ENCODE measurements at regions of chr19 and their contacts with region 1.

Region 1: DNA sequence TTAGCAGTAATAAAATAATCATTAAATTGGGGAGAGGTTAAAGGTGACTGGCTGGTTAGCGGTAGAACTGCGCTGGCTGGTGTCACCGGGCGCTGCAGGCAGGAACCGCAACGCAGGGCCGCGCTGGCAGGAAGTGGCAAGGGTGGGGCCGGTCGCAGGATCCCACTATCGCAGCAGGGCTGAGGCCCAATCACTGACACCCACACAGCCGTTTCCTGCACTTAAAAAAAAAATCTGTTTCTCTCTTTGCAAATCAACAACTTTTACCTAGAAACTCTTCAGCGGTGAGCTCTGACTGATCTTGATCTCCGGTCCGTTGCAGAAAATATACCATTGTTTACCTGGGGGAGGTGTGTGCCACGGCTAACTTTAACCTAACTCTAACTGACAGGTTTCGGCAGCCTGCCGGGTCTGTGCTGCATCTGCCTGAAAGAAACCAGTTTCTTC is 46.9 kb downstream of the KLF2 start:
- DNase-seq: peak; percentile 93
- H3K4me3 Mint-ChIP-seq: peak overlapping the region; percentile 37
- H3K27ac Mint-ChIP-seq: peak overlapping the region; percentile 66
- H3K4me1 Mint-ChIP-seq: peaks cover 35% of the 10 kb centered on the region
- H3K27me3 Mint-ChIP-seq: no peaks in the 10 kb centered on the region

Region 2: DNA sequence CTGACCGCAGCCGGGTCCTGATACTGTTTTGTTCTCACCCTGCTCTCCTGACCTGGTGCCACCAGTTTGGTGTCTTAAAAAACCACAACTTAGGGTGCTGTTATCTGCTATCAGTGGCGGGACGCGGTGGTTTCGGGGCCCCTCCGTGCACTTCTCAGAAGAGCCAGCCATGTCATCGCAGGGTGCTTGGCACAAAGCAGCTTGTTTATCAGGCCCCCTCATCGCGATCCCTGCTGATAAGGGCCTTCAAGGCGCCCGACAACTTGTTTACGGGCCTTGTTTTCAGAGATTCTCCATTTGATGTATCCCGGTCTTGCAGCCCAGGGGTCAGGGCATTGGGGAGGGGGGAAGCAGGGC is 105.0 kb before region 1 on chr19:
- intact Hi-C with region 1: loop called (anchors 5 kb)
- DNase-seq: peak; percentile 80
- H3K4me3 Mint-ChIP-seq: peak overlapping the region; percentile 15
- H3K27ac Mint-ChIP-seq: peak overlapping the region; percentile 13
- H3K4me1 Mint-ChIP-seq: peaks cover 38% of the 10 kb centered on the region
- H3K27me3 Mint-ChIP-seq: peaks cover 25% of the 10 kb centered on the region

Region 3: GRCh38 chr19:16283210-16284061 is 88.1 kb before region 1 on chr19:
- intact Hi-C with region 1: loop called (anchors 5 kb)
- DNase-seq: peak; percentile 32
- H3K4me3 Mint-ChIP-seq: peak overlapping the region; percentile 14
- H3K27ac Mint-ChIP-seq: no peak overlapping the region
- H3K4me1 Mint-ChIP-seq: peaks cover 31% of the 10 kb centered on the region
- H3K27me3 Mint-ChIP-seq: peaks cover 45% of the 10 kb centered on the region

Region 4: GRCh38 chr19:16330368-16330801 is 41.2 kb before region 1 on chr19:
- intact Hi-C with region 1: loop called (anchors 1 kb)
- DNase-seq: peak; percentile 90
- H3K4me3 Mint-ChIP-seq: peak overlapping the region; percentile 11
- H3K27ac Mint-ChIP-seq: no peak overlapping the region
- H3K4me1 Mint-ChIP-seq: peaks cover 57% of the 10 kb centered on the region
- H3K27me3 Mint-ChIP-seq: peaks cover 15% of the 10 kb centered on the region

Region 5: GRCh38 chr19:16338470-16339360 is 32.8 kb before region 1 on chr19:
- intact Hi-C with region 1: loop called (anchors 1 kb)
- DNase-seq: peak; percentile 67
- H3K4me3 Mint-ChIP-seq: peak overlapping the region; percentile 49
- H3K27ac Mint-ChIP-seq: peak overlapping the region; percentile 37
- H3K4me1 Mint-ChIP-seq: peaks cover 50% of the 10 kb centered on the region
- H3K27me3 Mint-ChIP-seq: peaks cover 16% of the 10 kb centered on the region

Measured in activated T-helper 2 cell treated with anti-CD3 and anti-CD28 coated beads, Interferon-gamma antibody, Interleukin-2, Interleukin-4, amounts not matched to agents 10 μg/mL and 5 μg/mL and 100 μg/mL, durations not matched to agents 14 hours and 24 hours and 36 hours (primary cell).